CD4-positive, alpha-beta T cell (primary cell): ENCODE measurements at regions of chr18 and their contacts with region 1.

Region 1: DNA sequence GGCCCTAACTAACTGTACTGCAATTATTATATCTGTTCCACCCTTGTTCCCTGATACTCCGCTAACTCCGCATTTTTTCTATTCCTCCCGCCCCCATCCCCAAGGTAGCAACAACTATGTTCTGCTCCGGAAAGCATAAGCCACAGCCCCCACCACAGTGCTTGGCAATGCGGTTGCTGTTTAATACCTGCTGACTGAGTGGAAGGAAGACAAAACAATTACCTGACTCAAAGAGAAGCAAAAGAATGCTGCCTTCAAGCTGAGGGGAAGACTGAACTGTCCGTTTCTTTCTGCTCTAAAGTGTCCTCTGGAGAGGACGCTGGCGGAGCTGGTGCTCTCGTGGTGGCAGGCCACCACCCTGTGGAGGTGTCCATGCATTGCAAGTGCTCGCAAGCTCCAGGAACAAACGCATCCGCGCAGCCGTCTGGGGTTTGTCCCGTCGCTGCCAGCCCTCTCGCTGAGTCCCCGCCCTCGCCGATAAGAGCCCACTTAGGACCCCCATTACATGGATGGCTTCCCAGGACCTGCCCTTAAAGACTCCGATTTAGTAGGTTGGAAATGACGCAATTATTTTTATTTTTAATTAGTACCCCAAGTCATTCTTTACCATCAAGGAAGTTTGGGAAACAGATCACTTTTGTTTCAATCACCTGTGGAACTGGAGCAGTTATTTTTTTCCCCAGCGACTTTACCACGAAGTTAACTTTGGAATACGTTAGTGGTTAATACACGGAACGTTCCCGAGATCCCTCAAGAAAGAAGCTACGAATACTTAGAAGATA is 1.6 kb upstream of the MYL12A start:
- DNase-seq: peak; percentile 57 to 89 (median 70)
- ATAC-seq: peak; percentile 57
- H3K4me3 ChIP-seq: peak overlapping the region; percentile 84
- H3K4me3 Mint-ChIP-seq: peak overlapping the region; percentile 93
- H3K27ac ChIP-seq: peak overlapping the region; percentile 84 to 92
- H3K27ac Mint-ChIP-seq: peak overlapping the region; percentile 100
- H3K4me1 ChIP-seq: peaks cover 32% of the 10 kb centered on the region
- H3K4me1 Mint-ChIP-seq: peaks cover 29% of the 10 kb centered on the region
- H3K27me3 ChIP-seq: no peaks in the 10 kb centered on the region
- H3K27me3 Mint-ChIP-seq: no peaks in the 10 kb centered on the region
- CTCF ChIP-seq: peak; percentile 72

Region 2: GRCh38 chr18:2655178-2655953 is 590.7 kb before region 1 on chr18 and contains the start of gene SMCHD1:
- CTCF ChIA-PET with region 1: no interaction called
- POLR2A ChIA-PET with region 1: interaction called, 13 read pairs
- intact Hi-C with region 1: loop called in 1 of 2 experiments (anchors 10 kb)
- DNase-seq: peak; percentile 73 to 96 (median 87)
- ATAC-seq: peak; percentile 67
- H3K4me3 ChIP-seq: peak within 1 kb of the TSS; percentile 97
- H3K4me3 Mint-ChIP-seq: peak within 1 kb of the TSS; percentile 97
- H3K27ac ChIP-seq: peak within 1 kb of the TSS; percentile 99
- H3K27ac Mint-ChIP-seq: peak within 1 kb of the TSS; percentile 89
- H3K4me1 ChIP-seq: peaks cover 25% of the 10 kb centered on the region
- H3K4me1 Mint-ChIP-seq: peaks cover 55% of the 10 kb centered on the region
- H3K27me3 ChIP-seq: no peaks in the 10 kb centered on the region
- H3K27me3 Mint-ChIP-seq: no peaks in the 10 kb centered on the region
- CTCF ChIP-seq: no peak
- total RNA-seq, gene SMCHD1: 357 to 359 TPM

Region 3: DNA sequence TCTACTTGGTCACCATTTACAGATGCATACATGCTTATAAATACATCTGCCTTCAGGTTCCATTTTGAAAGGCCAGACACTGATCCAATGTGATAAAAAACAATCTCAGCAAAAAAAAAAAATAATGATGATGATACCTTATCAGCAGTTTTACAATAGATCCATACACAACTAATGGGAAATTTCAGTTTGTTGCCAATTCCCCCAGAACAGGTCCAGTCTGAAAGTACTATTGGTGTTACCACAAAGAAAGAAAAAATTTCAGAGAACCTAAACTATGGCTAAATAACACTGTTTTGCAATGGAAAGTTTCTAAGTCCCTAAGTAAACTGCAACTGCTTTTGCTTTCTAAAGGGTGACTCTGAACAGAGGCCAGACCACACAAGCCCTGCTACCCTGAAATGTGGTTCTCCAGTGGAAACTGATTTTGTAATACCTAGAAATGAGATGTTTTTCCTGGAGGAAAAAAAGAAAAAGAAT is 287.2 kb before region 1 on chr18:
- CTCF ChIA-PET with region 1: no interaction called
- POLR2A ChIA-PET with region 1: interaction called, 44 read pairs
- intact Hi-C with region 1: no loop called
- DNase-seq: peak in 3 of 14 experiments; percentile 41 to 71 (median 47)
- ATAC-seq: no peak
- H3K4me3 ChIP-seq: no peak overlapping the region
- H3K4me3 Mint-ChIP-seq: peak overlapping the region; percentile 83
- H3K27ac ChIP-seq: peak overlapping the region; percentile 39 to 88
- H3K27ac Mint-ChIP-seq: peak overlapping the region; percentile 96
- H3K4me1 ChIP-seq: peaks cover 76% of the 10 kb centered on the region
- H3K4me1 Mint-ChIP-seq: peaks cover 95% of the 10 kb centered on the region
- H3K27me3 ChIP-seq: no peaks in the 10 kb centered on the region
- H3K27me3 Mint-ChIP-seq: no peaks in the 10 kb centered on the region
- CTCF ChIP-seq: no peak

Region 4: DNA sequence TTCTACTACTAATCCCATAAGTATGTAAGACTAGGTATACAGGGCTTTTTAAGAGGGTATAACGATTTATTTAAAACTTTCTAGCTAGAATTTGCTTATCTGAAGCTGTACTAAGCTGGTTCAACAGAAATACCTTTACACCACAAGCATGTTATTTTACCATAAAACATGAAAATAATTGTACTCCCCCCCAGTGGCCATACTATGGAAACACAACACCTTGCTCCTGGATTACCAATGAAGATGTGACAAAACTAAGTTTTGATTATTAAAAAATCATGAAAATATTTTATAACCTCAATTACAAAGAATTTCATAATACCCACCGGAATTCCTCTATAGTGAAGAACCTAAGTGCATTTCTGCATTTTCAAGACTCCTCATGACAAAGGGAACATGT is 260.4 kb before region 1 on chr18:
- CTCF ChIA-PET with region 1: interaction called, 8 read pairs
- POLR2A ChIA-PET with region 1: interaction called, 13 read pairs
- intact Hi-C with region 1: no loop called
- DNase-seq: peak in 4 of 14 experiments; percentile 25 to 77 (median 75)
- ATAC-seq: peak; percentile 69
- H3K4me3 ChIP-seq: no peak overlapping the region
- H3K4me3 Mint-ChIP-seq: no peak overlapping the region
- H3K27ac ChIP-seq: no peak overlapping the region
- H3K27ac Mint-ChIP-seq: peak overlapping the region; percentile 89
- H3K4me1 ChIP-seq: peaks cover 23% of the 10 kb centered on the region
- H3K4me1 Mint-ChIP-seq: peaks cover 79% of the 10 kb centered on the region
- H3K27me3 ChIP-seq: no peaks in the 10 kb centered on the region
- H3K27me3 Mint-ChIP-seq: no peaks in the 10 kb centered on the region
- CTCF ChIP-seq: peak; percentile 74

Region 5: DNA sequence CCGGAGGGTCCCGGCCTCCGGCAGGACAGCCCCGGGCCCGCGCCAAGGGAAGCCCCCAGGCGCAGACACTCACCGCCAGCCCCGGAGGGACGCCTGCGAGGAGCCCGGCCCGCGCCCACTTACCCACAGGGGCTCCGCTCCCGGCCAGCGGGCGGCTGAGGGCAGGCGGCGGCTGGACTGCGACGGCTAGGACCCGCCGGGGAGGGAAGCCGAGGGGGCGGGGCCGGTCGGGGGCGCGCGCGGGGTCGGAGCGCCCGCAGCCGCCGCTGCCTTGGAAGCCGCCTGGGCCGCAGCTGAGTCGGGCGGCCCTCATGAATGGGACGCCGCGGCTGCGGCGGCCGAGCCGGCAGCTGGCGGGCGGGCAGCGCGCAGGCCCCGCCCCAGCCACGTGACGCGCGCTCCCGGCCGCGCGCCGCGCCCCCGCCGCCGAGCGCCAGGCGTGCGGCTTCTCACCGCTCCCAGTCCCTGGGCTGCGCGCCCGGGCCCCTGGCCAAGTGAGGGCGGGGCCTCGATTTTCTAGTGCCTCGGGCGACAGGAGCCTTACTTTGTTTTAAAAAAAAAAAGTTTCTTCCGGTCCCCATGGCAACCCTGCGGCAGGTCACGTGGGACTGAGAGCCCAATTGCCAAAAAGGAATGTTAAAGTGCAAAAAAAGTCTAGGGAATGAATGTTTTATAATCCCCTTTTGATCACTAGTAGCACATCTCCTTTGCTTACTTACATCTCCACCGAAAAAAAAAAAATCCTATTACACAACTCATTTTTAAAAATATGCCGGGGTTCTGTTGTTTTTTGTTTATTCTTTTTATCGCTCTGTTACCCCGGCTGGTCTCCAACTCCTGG is 232.9 kb before region 1 on chr18 and contains the start of gene LPIN2:
- CTCF ChIA-PET with region 1: interaction called, 3 read pairs
- POLR2A ChIA-PET with region 1: interaction called, 5 read pairs
- intact Hi-C with region 1: loop called in 1 of 2 experiments (anchors 2 kb)
- DNase-seq: peak; percentile 93 to 99 (median 96)
- ATAC-seq: peak; percentile 91
- H3K4me3 ChIP-seq: peak within 1 kb of the TSS; percentile 68
- H3K4me3 Mint-ChIP-seq: peak within 1 kb of the TSS; percentile 94
- H3K27ac ChIP-seq: peak within 1 kb of the TSS; percentile 34 to 59
- H3K27ac Mint-ChIP-seq: peak within 1 kb of the TSS; percentile 92
- H3K4me1 ChIP-seq: peaks cover 74% of the 10 kb centered on the region
- H3K4me1 Mint-ChIP-seq: peaks cover 72% of the 10 kb centered on the region
- H3K27me3 ChIP-seq: no peaks in the 10 kb centered on the region
- H3K27me3 Mint-ChIP-seq: no peaks in the 10 kb centered on the region
- CTCF ChIP-seq: no peak
- total RNA-seq, gene LPIN2: 48.7 to 49.0 TPM

Region 6: DNA sequence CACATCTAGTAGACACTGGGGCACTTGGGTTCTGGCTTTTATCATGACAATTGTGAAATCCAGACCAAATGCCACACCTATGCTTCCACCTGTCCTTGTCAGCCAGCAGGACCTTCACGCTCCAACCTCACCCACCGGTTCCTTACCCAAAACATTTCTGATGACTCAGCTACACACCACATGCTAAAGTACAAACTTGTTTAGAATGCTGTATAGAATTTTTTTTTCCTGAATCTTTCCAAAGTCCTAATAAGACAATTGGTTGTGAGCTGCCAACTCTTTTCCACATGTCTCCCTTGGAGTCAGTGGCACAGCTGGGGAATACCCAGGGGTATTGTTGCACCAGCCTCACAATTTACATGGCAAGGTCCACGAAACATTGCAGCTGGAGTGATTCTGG is 157.6 kb before region 1 on chr18:
- CTCF ChIA-PET with region 1: no interaction called
- POLR2A ChIA-PET with region 1: no interaction called
- intact Hi-C with region 1: no loop called
- DNase-seq: no peak
- ATAC-seq: no peak
- H3K4me3 ChIP-seq: no peak overlapping the region
- H3K4me3 Mint-ChIP-seq: no peak overlapping the region
- H3K27ac ChIP-seq: no peak overlapping the region
- H3K27ac Mint-ChIP-seq: no peak overlapping the region
- H3K4me1 ChIP-seq: peaks cover 7% of the 10 kb centered on the region
- H3K4me1 Mint-ChIP-seq: peaks cover 10% of the 10 kb centered on the region
- H3K27me3 ChIP-seq: no peaks in the 10 kb centered on the region
- H3K27me3 Mint-ChIP-seq: no peaks in the 10 kb centered on the region
- CTCF ChIP-seq: no peak

Region 7: DNA sequence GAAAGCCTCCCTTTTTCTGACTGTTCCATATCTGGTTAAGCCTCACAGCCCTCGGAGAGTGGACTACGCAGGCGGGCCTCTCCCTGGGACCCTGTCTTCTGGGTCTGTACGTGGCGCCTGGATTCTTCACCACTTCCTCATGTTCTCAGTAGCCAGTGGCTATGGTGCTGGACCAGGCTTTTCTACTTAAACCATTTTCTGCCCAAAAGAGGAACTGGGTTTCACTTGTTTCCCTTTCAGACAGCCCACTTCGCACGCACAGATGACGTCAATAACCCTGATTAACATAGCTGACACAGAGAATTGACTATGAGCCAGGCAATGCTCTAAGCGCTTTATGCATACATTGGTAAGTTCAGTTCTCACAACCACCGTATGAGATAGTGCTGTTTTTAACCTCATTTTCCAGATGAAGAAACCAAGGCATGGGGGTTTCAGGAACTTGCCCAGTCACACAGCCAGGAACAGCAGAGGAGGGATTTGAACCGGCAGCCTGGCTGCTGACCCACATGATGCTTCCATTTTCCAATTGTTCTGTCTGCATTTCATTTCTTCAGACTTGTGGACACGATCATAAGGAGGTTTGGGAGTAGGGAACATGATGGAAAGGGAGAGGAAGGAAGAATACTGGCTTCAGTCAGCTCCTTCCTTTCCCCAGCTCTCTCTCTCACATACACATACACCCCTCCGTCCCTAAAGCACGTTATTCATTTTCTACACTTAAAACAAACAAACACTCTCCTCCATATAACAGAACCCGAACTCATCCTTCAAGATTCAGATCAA is 67.9 kb before region 1 on chr18:
- CTCF ChIA-PET with region 1: no interaction called
- POLR2A ChIA-PET with region 1: no interaction called
- intact Hi-C with region 1: no loop called
- DNase-seq: peak in 3 of 14 experiments; percentile 43 to 80 (median 74)
- ATAC-seq: peak; percentile 32
- H3K4me3 ChIP-seq: no peak overlapping the region
- H3K4me3 Mint-ChIP-seq: no peak overlapping the region
- H3K27ac ChIP-seq: no peak overlapping the region
- H3K27ac Mint-ChIP-seq: no peak overlapping the region
- H3K4me1 ChIP-seq: no peaks in the 10 kb centered on the region
- H3K4me1 Mint-ChIP-seq: no peaks in the 10 kb centered on the region
- H3K27me3 ChIP-seq: no peaks in the 10 kb centered on the region
- H3K27me3 Mint-ChIP-seq: no peaks in the 10 kb centered on the region
- CTCF ChIP-seq: no peak

Region 8: GRCh38 chr18:3261371-3262246 is 15.6 kb after region 1 on chr18 and contains the start of gene MYL12B:
- CTCF ChIA-PET with region 1: interaction called, 11 read pairs
- POLR2A ChIA-PET with region 1: interaction called, 286 read pairs
- intact Hi-C with region 1: loop called (anchors 1 kb)
- DNase-seq: peak; percentile 63 to 92 (median 75)
- ATAC-seq: peak; percentile 71
- H3K4me3 ChIP-seq: peak within 1 kb of the TSS; percentile 68
- H3K4me3 Mint-ChIP-seq: peak within 1 kb of the TSS; percentile 100
- H3K27ac ChIP-seq: peak within 1 kb of the TSS; percentile 95 to 98
- H3K27ac Mint-ChIP-seq: peak within 1 kb of the TSS; percentile 100
- H3K4me1 ChIP-seq: peaks cover 43% of the 10 kb centered on the region
- H3K4me1 Mint-ChIP-seq: peaks cover 85% of the 10 kb centered on the region
- H3K27me3 ChIP-seq: no peaks in the 10 kb centered on the region
- H3K27me3 Mint-ChIP-seq: no peaks in the 10 kb centered on the region
- CTCF ChIP-seq: no peak
- total RNA-seq, gene MYL12B: 128 to 133 TPM

Region 9: GRCh38 chr18:3593904-3594661 is 348.0 kb after region 1 on chr18:
- CTCF ChIA-PET with region 1: interaction called, 4 read pairs
- POLR2A ChIA-PET with region 1: interaction called, 52 read pairs
- intact Hi-C with region 1: no loop called
- DNase-seq: peak; percentile 79 to 97 (median 88)
- ATAC-seq: peak; percentile 74
- H3K4me3 ChIP-seq: peak overlapping the region; percentile 59
- H3K4me3 Mint-ChIP-seq: peak overlapping the region; percentile 94
- H3K27ac ChIP-seq: peak overlapping the region; percentile 89 to 98
- H3K27ac Mint-ChIP-seq: peak overlapping the region; percentile 100
- H3K4me1 ChIP-seq: peaks cover 62% of the 10 kb centered on the region
- H3K4me1 Mint-ChIP-seq: peaks cover 59% of the 10 kb centered on the region
- H3K27me3 ChIP-seq: no peaks in the 10 kb centered on the region
- H3K27me3 Mint-ChIP-seq: no peaks in the 10 kb centered on the region
- CTCF ChIP-seq: peak; percentile 82